ENCODE measurements at regions of chr12 and their contacts with region 1.

Region 1: DNA sequence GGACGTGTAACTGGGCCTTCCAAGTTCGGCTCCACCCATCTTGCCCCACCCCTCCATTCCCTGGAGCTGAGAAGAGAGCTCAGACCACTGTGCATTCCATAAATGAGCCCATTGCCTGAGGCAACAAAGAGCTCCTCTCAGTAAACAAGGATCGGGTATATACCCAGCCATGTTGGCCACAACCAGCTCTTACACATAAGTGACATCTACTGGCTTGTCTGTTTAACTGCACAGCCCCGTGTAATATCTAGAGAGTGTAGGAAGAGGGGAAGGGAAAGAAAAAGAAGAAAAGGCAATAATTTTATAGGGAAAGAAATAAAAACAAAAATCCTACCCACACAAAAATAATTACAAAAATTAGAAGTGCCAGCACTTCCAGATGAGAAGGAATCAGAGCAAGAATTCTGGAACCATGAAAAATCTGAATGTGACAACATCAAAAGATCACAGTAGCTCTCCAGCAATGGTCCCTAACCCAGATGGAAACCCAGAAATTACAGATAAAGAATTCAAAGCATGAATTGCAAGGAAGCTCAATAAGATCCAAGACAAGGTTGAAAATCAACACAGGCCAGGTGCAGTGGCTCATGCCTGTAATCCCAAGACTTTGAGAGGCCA is 308.1 kb downstream of the RPAP3 start:
- DNase-seq: peak; percentile 84
- H3K4me3 Mint-ChIP-seq: peak overlapping the region; percentile 59
- H3K27ac Mint-ChIP-seq: peak overlapping the region; percentile 99
- H3K4me1 Mint-ChIP-seq: peaks cover 79% of the 10 kb centered on the region
- H3K27me3 Mint-ChIP-seq: no peaks in the 10 kb centered on the region

Region 2: DNA sequence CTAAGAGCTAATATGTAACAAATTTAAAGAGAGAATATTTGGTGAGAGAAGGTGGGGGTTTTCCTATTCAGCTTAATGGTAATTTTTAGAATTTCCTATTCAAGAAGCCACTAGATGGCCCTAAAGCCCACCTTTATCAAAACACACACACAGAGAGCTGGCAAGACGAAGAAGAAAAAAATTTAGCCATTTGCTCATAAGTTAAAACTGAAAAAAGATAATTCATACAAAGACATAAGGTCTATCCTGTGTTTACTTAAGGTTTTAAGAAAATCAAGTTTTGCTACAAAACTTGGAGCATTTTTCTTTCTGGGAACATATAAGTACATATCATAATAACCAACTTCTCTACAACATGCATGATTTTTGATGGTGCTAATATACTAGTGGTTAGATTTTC is 365.1 kb before region 1 on chr12:
- intact Hi-C with region 1: loop called (anchors 1 kb)
- DNase-seq: peak; percentile 72
- H3K4me3 Mint-ChIP-seq: no peak overlapping the region
- H3K27ac Mint-ChIP-seq: no peak overlapping the region
- H3K4me1 Mint-ChIP-seq: peaks cover 13% of the 10 kb centered on the region
- H3K27me3 Mint-ChIP-seq: peaks cover 2% of the 10 kb centered on the region

Region 3: GRCh38 chr12:47307680-47308399 is 89.9 kb before region 1 on chr12:
- intact Hi-C with region 1: loop called (anchors 1 kb)
- DNase-seq: peak; percentile 88
- H3K4me3 Mint-ChIP-seq: peak overlapping the region; percentile 88
- H3K27ac Mint-ChIP-seq: peak overlapping the region; percentile 88
- H3K4me1 Mint-ChIP-seq: peaks cover 51% of the 10 kb centered on the region
- H3K27me3 Mint-ChIP-seq: no peaks in the 10 kb centered on the region

Region 4: DNA sequence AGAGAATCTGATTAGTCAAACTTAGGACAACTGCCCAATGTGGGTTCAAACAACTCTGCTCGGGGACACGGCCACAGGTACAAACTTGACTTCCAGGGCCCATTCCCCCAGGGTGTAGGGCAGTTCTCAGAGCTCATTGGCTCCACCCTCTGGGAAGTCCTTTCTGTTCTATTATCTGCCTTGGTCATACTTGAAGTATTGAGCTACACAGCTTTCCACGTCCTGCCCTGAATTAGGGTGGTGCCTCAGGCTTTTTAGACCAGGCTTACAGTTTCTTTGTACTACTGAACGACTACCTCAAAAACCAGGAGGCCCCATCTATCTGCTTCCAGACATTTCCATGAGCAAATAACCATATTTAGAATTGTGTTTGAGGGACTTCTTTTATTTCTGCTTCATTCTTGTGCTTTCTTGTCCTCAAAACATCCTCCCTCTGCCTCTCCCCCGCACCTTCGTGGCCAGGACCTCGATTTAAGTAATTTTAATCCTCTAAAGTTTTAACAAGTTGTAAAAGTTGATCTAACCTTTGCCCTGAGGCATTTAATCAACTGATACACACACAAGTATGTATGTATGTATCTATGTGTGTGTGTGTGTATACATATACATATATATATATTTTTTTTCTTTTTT is 36.3 kb before region 1 on chr12:
- intact Hi-C with region 1: loop called (anchors 1 kb)
- DNase-seq: peak; percentile 88
- H3K4me3 Mint-ChIP-seq: peak overlapping the region; percentile 81
- H3K27ac Mint-ChIP-seq: peak overlapping the region; percentile 98
- H3K4me1 Mint-ChIP-seq: peaks cover 53% of the 10 kb centered on the region
- H3K27me3 Mint-ChIP-seq: no peaks in the 10 kb centered on the region

Region 5: DNA sequence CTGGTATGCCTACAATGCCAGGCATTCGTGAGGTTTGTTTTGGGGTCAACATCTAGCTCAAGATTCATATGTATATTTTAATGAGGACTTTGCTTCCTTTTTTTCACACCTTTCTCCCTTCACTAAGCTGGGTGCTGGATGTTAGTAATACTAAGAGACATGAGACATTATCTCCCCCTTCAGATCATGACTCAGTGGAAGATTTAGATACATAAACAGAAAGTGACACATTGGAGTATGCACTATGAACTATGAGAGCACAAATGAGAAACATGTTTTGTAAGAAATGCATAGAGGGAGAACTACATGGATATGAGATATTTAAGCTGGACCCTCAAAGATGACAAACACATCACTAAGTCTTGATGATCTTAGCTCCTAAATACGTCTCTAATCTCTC is 21.7 kb after region 1 on chr12:
- intact Hi-C with region 1: loop called (anchors 1 kb)
- DNase-seq: no peak
- H3K4me3 Mint-ChIP-seq: no peak overlapping the region
- H3K27ac Mint-ChIP-seq: peak overlapping the region; percentile 78
- H3K4me1 Mint-ChIP-seq: peaks cover 20% of the 10 kb centered on the region
- H3K27me3 Mint-ChIP-seq: no peaks in the 10 kb centered on the region

Region 6: GRCh38 chr12:47870175-47870781 is 472.5 kb after region 1 on chr12:
- intact Hi-C with region 1: no loop called
- DNase-seq: no peak
- H3K4me3 Mint-ChIP-seq: peak overlapping the region; percentile 51
- H3K27ac Mint-ChIP-seq: peak overlapping the region; percentile 93
- H3K4me1 Mint-ChIP-seq: peaks cover 77% of the 10 kb centered on the region
- H3K27me3 Mint-ChIP-seq: no peaks in the 10 kb centered on the region